H1 (cell line): ENCODE measurements at regions of chr4 and their contacts with region 1.

Region 1: GRCh38 chr4:6427439-6428090 is 44.8 kb downstream of the PPP2R2C start:
- DNase-seq: no peak
- H3K4me3 ChIP-seq: no peak overlapping the region
- H3K27ac ChIP-seq: no peak overlapping the region
- H3K4me1 ChIP-seq: no peaks in the 10 kb centered on the region
- H3K27me3 ChIP-seq: no peaks in the 10 kb centered on the region
- CTCF ChIP-seq: peak in 2 of 3 experiments; percentile 58 to 59; a peak in 3 of 4 replicates
- EP300 ChIP-seq: no peak
- POLR2A ChIP-seq: no peak
- RAD21 ChIP-seq: peak; percentile 58 to 66

Region 2: DNA sequence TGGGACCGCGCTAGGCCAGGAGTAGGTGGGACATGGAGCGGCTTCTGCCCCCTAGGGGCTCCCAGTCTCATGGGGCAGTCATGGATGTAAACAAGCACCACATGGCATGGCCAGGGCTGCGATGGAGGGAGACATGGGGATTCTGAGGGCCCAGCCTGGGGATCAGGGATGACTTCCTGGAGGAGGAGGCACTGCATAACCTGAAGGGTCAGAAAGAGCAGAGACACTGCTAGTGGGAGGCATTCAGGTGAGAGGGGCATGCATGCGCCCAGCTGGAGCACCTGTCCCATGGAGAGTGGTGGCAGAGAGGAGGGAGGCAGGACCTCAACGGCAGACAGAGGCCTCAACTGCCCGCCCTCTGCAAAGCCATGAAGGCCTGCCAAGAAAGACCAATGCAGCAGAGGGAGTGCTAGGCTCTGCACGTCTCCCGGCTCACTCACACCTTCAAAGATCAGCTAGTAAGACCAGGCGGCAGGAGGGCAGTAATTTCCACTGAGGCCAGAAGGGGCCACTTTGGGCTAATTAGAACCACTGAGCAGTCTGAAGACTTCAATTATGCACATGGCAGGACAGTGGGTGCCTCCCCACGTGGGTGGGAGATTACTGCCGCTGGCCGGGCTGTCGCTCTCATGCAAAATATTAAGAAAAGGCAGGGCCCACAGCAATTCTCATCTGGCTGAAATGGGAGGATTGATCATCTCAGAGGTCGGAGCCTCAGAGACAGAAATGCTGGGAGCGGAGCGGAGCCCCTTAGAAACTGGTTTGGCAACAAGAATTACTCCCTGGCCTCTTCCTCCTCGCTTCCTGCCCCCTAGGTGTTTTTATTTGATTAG is 24.8 kb before region 1 on chr4:
- CTCF ChIA-PET with region 1: interaction called, 32 read pairs
- POLR2A ChIA-PET with region 1: no interaction called
- DNase-seq: peak in 1 of 2 experiments; percentile 21
- H3K4me3 ChIP-seq: no peak overlapping the region
- H3K27ac ChIP-seq: no peak overlapping the region
- H3K4me1 ChIP-seq: peaks cover 0 to 13% (median 7%) of the 10 kb centered on the region in 4 experiments; a peak in 4 of 7 replicates
- H3K27me3 ChIP-seq: no peaks in the 10 kb centered on the region; a peak in 1 of 7 replicates
- CTCF ChIP-seq: peak in 2 of 3 experiments; percentile 54 to 58; a peak in 3 of 4 replicates
- EP300 ChIP-seq: no peak
- POLR2A ChIP-seq: no peak
- RAD21 ChIP-seq: peak; percentile 54 to 60

Region 3: DNA sequence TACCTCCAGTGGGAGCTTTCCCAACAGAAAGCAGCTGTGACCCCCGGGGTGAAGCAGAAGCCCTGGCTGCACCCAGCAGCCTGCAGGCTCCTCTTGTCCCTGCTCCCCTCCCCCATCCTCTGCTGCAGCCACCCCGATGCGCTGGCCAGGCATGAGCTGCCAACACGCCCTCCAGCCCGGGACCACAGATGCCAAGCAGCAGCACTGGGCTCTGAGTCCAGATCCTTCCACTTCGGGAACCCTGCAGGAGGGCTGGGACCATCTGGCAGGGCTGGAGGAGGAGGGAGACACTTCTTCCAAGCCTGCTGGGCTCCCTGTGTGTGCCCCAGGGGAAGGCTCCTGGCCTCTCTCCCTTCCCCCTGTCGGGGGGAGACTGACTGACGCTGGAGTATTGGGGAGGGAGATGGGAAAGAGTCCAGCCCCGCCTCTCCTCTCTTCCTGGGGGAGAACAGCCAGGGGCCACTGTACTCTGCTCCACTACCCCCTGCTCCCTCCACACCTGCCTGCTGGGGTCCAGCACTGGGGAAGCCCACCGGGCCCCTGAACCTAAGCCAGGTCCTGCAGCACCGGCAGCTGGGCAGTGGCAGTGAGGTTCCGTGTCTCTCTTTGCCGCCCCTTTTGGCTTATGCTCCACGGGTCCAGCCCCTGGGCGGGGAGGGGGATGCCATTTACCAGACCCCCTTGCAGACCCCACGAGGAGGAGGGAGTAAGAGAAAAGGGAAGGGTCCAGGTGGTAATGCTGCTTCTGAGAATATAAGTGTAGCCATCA is 10.9 kb before region 1 on chr4:
- CTCF ChIA-PET with region 1: interaction called, 18 read pairs
- POLR2A ChIA-PET with region 1: no interaction called
- DNase-seq: no peak
- H3K4me3 ChIP-seq: no peak overlapping the region
- H3K27ac ChIP-seq: no peak overlapping the region
- H3K4me1 ChIP-seq: peaks cover 0 to 23% (median 17%) of the 10 kb centered on the region in 4 experiments; a peak in 6 of 7 replicates
- H3K27me3 ChIP-seq: no peaks in the 10 kb centered on the region
- CTCF ChIP-seq: no peak
- EP300 ChIP-seq: no peak
- POLR2A ChIP-seq: no peak
- RAD21 ChIP-seq: no peak

Region 4: GRCh38 chr4:6439120-6439762 is 11.7 kb after region 1 on chr4:
- CTCF ChIA-PET with region 1: interaction called, 12 read pairs
- POLR2A ChIA-PET with region 1: no interaction called
- DNase-seq: no peak
- H3K4me3 ChIP-seq: no peak overlapping the region
- H3K27ac ChIP-seq: no peak overlapping the region
- H3K4me1 ChIP-seq: no peaks in the 10 kb centered on the region; a peak in 1 of 7 replicates
- H3K27me3 ChIP-seq: peaks cover 0 to 3% (median 1%) of the 10 kb centered on the region in 4 experiments; a peak in 2 of 7 replicates
- CTCF ChIP-seq: no peak
- EP300 ChIP-seq: no peak
- POLR2A ChIP-seq: no peak
- RAD21 ChIP-seq: no peak